Uterus (tissue), 4 donors: ENCODE measurements at regions of chr3 and their contacts with region 1.

Region 1: GRCh38 chr3:134212906-134213665 is 37.6 kb downstream of the RYK start:
- DNase-seq: peak; percentile 81 to 84
- H3K4me3 ChIP-seq: no peak overlapping the region
- H3K27ac ChIP-seq: no peak overlapping the region
- H3K4me1 ChIP-seq: no peaks in the 10 kb centered on the region
- H3K27me3 ChIP-seq: no peaks in the 10 kb centered on the region
- CTCF ChIP-seq: peak; percentile 91 to 98 (median 94)
- POLR2A ChIP-seq: no peak

Region 2: GRCh38 chr3:133756716-133757694 is 456.1 kb before region 1 on chr3:
- intact Hi-C with region 1: no loop called
- DNase-seq: no peak
- H3K4me3 ChIP-seq: no peak overlapping the region
- H3K27ac ChIP-seq: no peak overlapping the region
- H3K4me1 ChIP-seq: no peaks in the 10 kb centered on the region
- H3K27me3 ChIP-seq: no peaks in the 10 kb centered on the region
- CTCF ChIP-seq: no peak
- POLR2A ChIP-seq: no peak

Region 3: GRCh38 chr3:134161898-134162615 is 51.0 kb before region 1 on chr3:
- intact Hi-C with region 1: no loop called
- DNase-seq: no peak
- H3K4me3 ChIP-seq: no peak overlapping the region
- H3K27ac ChIP-seq: peak overlapping the region in 1 of 2 donors; percentile 22
- H3K4me1 ChIP-seq: no peaks in the 10 kb centered on the region
- H3K27me3 ChIP-seq: no peaks in the 10 kb centered on the region
- CTCF ChIP-seq: no peak
- POLR2A ChIP-seq: no peak

Region 4: GRCh38 chr3:134300515-134300914 is 87.4 kb after region 1 on chr3:
- intact Hi-C with region 1: loop called (anchors 2 kb)
- DNase-seq: no peak
- H3K4me3 ChIP-seq: no peak overlapping the region
- H3K27ac ChIP-seq: no peak overlapping the region
- H3K4me1 ChIP-seq: no peaks in the 10 kb centered on the region
- H3K27me3 ChIP-seq: no peaks in the 10 kb centered on the region
- CTCF ChIP-seq: no peak
- POLR2A ChIP-seq: no peak